Activated CD4-positive, alpha-beta memory T cell treated with anti-CD3 and anti-CD28 coated beads, Interleukin-2, amount 10 ng/mL, durations not matched to agents 7 days and 5 days (primary cell): ENCODE measurements at regions of chr12 and their contacts with region 1.

Region 1: GRCh38 chr12:6570264-6570887 is 2.3 kb upstream of the NOP2 start:
- DNase-seq: peak; percentile 56
- H3K4me3 Mint-ChIP-seq: peak overlapping the region; percentile 43
- H3K27ac Mint-ChIP-seq: peak overlapping the region; percentile 49
- H3K4me1 Mint-ChIP-seq: peaks cover 54% of the 10 kb centered on the region
- H3K27me3 Mint-ChIP-seq: no peaks in the 10 kb centered on the region

Region 2: DNA sequence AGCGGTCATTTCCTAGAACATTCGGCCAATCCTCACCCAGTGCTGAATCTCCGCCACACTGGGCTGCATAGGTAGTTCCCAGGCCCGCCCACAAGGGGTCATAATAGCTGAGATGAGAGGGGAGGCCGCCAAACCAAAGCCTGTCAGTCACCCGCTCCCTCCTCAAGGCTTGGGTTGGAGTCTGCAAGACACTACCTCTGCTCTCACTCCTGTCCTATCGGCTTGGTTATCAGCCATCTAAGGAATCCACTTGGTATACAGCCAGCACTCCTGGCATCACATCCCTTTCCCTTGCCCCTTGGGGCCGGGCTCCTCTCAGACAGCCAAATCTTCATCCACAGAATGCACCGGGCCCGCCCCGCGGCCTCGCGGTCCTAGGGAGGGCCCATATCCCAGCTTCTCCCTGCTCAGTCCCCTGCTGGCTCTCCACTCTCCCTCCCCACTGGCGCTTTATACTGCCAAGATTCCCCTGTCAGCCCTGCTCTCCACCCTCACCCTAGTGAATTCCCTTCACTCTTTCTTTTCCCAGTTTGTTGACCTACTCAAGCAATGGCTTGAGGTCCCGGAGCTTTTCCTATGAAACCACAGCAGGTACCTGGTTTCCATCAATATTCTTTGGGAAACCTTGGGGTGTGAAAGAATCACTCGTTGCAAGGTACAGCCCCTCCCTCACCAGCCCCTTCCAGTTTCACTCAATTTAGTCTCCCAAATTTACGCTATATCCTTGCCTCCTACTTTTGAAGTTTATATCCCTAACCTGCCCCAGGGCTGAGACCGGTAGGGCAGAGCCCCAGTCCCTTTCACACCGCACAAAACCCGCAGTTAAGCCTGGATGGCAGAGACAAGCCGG is 16.0 kb before region 1 on chr12:
- CTCF ChIA-PET with region 1: interaction called, 16 read pairs
- POLR2A ChIA-PET with region 1: interaction called, 22 read pairs
- DNase-seq: peak; percentile 80
- H3K4me3 Mint-ChIP-seq: peak overlapping the region; percentile 86
- H3K27ac Mint-ChIP-seq: peak overlapping the region; percentile 66
- H3K4me1 Mint-ChIP-seq: peaks cover 55% of the 10 kb centered on the region
- H3K27me3 Mint-ChIP-seq: no peaks in the 10 kb centered on the region